ENCODE measurements at regions of chr5 and their contacts with region 1.

Region 1: DNA sequence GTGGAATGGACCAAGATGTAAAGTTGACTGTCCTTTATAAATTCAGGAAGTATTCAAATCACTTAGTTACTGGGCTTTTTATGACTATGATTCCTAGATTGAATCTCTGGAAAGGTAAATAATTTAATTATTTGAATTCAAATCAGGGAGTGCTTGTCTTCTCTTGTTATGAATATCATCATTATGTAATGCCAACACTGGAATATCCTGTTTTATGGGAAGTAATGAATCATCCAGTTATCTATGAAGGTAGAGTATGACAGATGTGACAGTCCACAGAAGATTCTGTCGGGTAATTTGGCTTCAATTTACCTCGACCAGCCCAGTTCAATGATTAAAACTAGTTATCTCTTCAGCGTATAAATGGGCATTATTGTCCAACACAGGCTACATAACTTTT is 141.0 kb upstream of the NUDT12 start:
- DNase-seq: no peak
- H3K4me3 ChIP-seq: no peak overlapping the region
- H3K27ac ChIP-seq: no peak overlapping the region
- H3K4me1 ChIP-seq: 0 out of 2 replicates have a peak, but pooled peaks cover 8% of the 10 kb centered on the region
- H3K27me3 ChIP-seq: no peaks in the 10 kb centered on the region
- CTCF ChIP-seq: no peak

Region 2: GRCh38 chr5:103305829-103306228 is 397.8 kb before region 1 on chr5:
- CTCF ChIA-PET with region 1: no interaction called
- POLR2A ChIA-PET with region 1: no interaction called
- intact Hi-C with region 1: no loop called
- DNase-seq: peak in 1 of 2 experiments; percentile 46
- H3K4me3 ChIP-seq: no peak overlapping the region
- H3K27ac ChIP-seq: no peak overlapping the region
- H3K4me1 ChIP-seq: 0 out of 2 replicates have a peak, but pooled peaks cover 6% of the 10 kb centered on the region
- H3K27me3 ChIP-seq: no peaks in the 10 kb centered on the region
- CTCF ChIP-seq: no peak

Region 3: GRCh38 chr5:103648086-103648485 is 55.5 kb before region 1 on chr5:
- CTCF ChIA-PET with region 1: no interaction called
- POLR2A ChIA-PET with region 1: no interaction called
- intact Hi-C with region 1: loop called (anchors 5 kb)
- DNase-seq: no peak
- H3K4me3 ChIP-seq: no peak overlapping the region
- H3K27ac ChIP-seq: no peak overlapping the region
- H3K4me1 ChIP-seq: no peaks in the 10 kb centered on the region
- H3K27me3 ChIP-seq: no peaks in the 10 kb centered on the region
- CTCF ChIP-seq: no peak